ENCODE measurements at regions of chr4 and their contacts with region 1.

Region 1: GRCh38 chr4:57190601-57191481 is 80.7 kb upstream of the IGFBP7 start:
- DNase-seq: no peak
- H3K4me3 ChIP-seq: no peak overlapping the region
- H3K4me3 Mint-ChIP-seq: no peak overlapping the region
- H3K27ac ChIP-seq: no peak overlapping the region
- H3K27ac Mint-ChIP-seq: no peak overlapping the region
- H3K4me1 ChIP-seq: no peaks in the 10 kb centered on the region
- H3K4me1 Mint-ChIP-seq: peaks cover 0 to 2% (median under 1%) of the 10 kb centered on the region in 4 donors
- H3K27me3 ChIP-seq: no peaks in the 10 kb centered on the region
- H3K27me3 Mint-ChIP-seq: peaks cover 7 to 8% of the 10 kb centered on the region in 2 donors

Region 2: GRCh38 chr4:57200928-57201327 is 10.1 kb after region 1 on chr4:
- CTCF ChIA-PET with region 1: interaction called, 13 read pairs
- POLR2A ChIA-PET with region 1: no interaction called
- intact Hi-C with region 1: no loop called
- DNase-seq: no peak
- H3K4me3 ChIP-seq: no peak overlapping the region
- H3K4me3 Mint-ChIP-seq: no peak overlapping the region
- H3K27ac ChIP-seq: no peak overlapping the region
- H3K27ac Mint-ChIP-seq: no peak overlapping the region
- H3K4me1 ChIP-seq: no peaks in the 10 kb centered on the region
- H3K4me1 Mint-ChIP-seq: no peaks in the 10 kb centered on the region
- H3K27me3 ChIP-seq: no peaks in the 10 kb centered on the region
- H3K27me3 Mint-ChIP-seq: peaks cover 3 to 6% of the 10 kb centered on the region in 2 donors

Region 3: DNA sequence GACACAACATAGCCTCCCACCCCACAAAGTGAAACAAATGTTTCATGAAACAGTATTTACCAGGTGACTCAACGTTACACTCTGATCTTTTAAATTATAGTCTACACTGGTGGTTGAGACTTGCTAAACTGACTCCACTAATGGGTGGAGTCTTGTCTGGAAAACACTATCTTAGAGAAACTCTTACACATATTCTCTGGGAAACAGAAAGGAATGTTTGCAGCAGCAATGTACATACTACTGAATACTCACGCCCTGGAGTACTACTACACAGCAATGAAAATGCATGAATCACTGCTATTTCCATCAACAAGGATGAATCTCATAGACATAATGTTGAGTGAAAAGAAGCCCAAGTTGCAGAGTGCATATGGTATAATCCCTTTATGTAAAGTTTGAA is 127.9 kb after region 1 on chr4:
- CTCF ChIA-PET with region 1: no interaction called
- POLR2A ChIA-PET with region 1: no interaction called
- intact Hi-C with region 1: no loop called
- DNase-seq: no peak
- H3K4me3 ChIP-seq: no peak overlapping the region
- H3K4me3 Mint-ChIP-seq: no peak overlapping the region
- H3K27ac ChIP-seq: no peak overlapping the region
- H3K27ac Mint-ChIP-seq: no peak overlapping the region
- H3K4me1 ChIP-seq: no peaks in the 10 kb centered on the region
- H3K4me1 Mint-ChIP-seq: no peaks in the 10 kb centered on the region
- H3K27me3 ChIP-seq: no peaks in the 10 kb centered on the region
- H3K27me3 Mint-ChIP-seq: no peaks in the 10 kb centered on the region